Caco-2 (cell line): ENCODE measurements at regions of chrX and their contacts with region 1.

Region 1: GRCh38 chrX:150898343-150899190 is at the start of gene CD99L2:
- DNase-seq: peak; percentile 85 to 89
- H3K4me3 ChIP-seq: peak within 1 kb of the TSS; percentile 62
- H3K4me3 Mint-ChIP-seq: peak within 1 kb of the TSS; percentile 73
- H3K27ac Mint-ChIP-seq: no peak within 1 kb of the TSS
- H3K4me1 ChIP-seq: no peaks in the 10 kb centered on the region
- H3K4me1 Mint-ChIP-seq: no peaks in the 10 kb centered on the region
- H3K27me3 ChIP-seq: no peaks in the 10 kb centered on the region
- H3K27me3 Mint-ChIP-seq: peaks cover 6% of the 10 kb centered on the region
- CTCF ChIP-seq: no peak
- total RNA-seq, gene CD99L2: 8.6 and 9.3 TPM in 2 replicates

Region 2: DNA sequence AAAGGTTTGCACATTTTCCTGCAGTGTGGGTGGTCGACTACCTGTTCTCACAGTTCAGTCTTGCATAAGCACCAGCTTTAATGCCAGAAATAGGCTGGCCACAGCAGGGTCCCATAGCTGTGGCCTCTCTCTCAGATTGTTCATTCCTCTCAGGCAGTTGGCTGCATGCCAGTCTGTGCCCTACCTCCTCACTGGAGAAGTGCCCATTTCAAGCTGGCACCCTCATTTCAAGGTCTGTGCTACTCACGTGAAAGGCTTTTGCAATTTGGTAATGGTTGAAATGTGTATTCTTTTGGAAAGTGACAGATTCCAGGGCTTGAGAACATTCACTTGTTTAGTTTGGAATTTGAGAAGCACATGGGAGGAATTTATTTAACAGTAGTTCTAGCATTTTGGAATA is 234.3 kb before region 1 on chrX:
- CTCF ChIA-PET with region 1: no interaction called
- POLR2A ChIA-PET with region 1: no interaction called
- intact Hi-C with region 1: no loop called
- DNase-seq: no peak
- H3K4me3 ChIP-seq: no peak overlapping the region
- H3K4me3 Mint-ChIP-seq: no peak overlapping the region
- H3K27ac Mint-ChIP-seq: no peak overlapping the region
- H3K4me1 ChIP-seq: no peaks in the 10 kb centered on the region
- H3K4me1 Mint-ChIP-seq: no peaks in the 10 kb centered on the region
- H3K27me3 ChIP-seq: no peaks in the 10 kb centered on the region
- H3K27me3 Mint-ChIP-seq: no peaks in the 10 kb centered on the region
- CTCF ChIP-seq: no peak

Region 3: GRCh38 chrX:150966235-150966634 is 67.7 kb after region 1 on chrX:
- CTCF ChIA-PET with region 1: no interaction called
- POLR2A ChIA-PET with region 1: no interaction called
- intact Hi-C with region 1: loop called (anchors 1 kb)
- DNase-seq: no peak
- H3K4me3 ChIP-seq: no peak overlapping the region
- H3K4me3 Mint-ChIP-seq: peak overlapping the region; percentile 41
- H3K27ac Mint-ChIP-seq: no peak overlapping the region
- H3K4me1 ChIP-seq: 0 out of 2 replicates have a peak, but pooled peaks cover 4% of the 10 kb centered on the region
- H3K4me1 Mint-ChIP-seq: peaks cover 6% of the 10 kb centered on the region
- H3K27me3 ChIP-seq: no peaks in the 10 kb centered on the region
- H3K27me3 Mint-ChIP-seq: no peaks in the 10 kb centered on the region
- CTCF ChIP-seq: no peak

Region 4: GRCh38 chrX:150982788-150983520 is 84.4 kb after region 1 on chrX and contains the start of gene HMGB3:
- CTCF ChIA-PET with region 1: no interaction called
- POLR2A ChIA-PET with region 1: no interaction called
- intact Hi-C with region 1: loop called (anchors 2 kb)
- DNase-seq: peak; percentile 90 to 93
- H3K4me3 ChIP-seq: peak within 1 kb of the TSS; percentile 69
- H3K4me3 Mint-ChIP-seq: peak within 1 kb of the TSS; percentile 67
- H3K27ac Mint-ChIP-seq: no peak within 1 kb of the TSS
- H3K4me1 ChIP-seq: no peaks in the 10 kb centered on the region
- H3K4me1 Mint-ChIP-seq: no peaks in the 10 kb centered on the region
- H3K27me3 ChIP-seq: no peaks in the 10 kb centered on the region
- H3K27me3 Mint-ChIP-seq: no peaks in the 10 kb centered on the region
- CTCF ChIP-seq: no peak
- total RNA-seq, gene HMGB3: 90.3 and 115 TPM in 2 replicates